ENCODE measurements at regions of chr2 and their contacts with region 1.

Region 1: GRCh38 chr2:189115126-189115525 is 64.4 kb downstream of the COL5A2 start:
- DNase-seq: no peak
- H3K4me3 ChIP-seq: no peak overlapping the region
- H3K27ac ChIP-seq: no peak overlapping the region
- H3K27me3 ChIP-seq: no peaks in the 10 kb centered on the region
- CTCF ChIP-seq: peak in 43 of 56 donors; percentile 7 to 59 (median 29)

Region 2: DNA sequence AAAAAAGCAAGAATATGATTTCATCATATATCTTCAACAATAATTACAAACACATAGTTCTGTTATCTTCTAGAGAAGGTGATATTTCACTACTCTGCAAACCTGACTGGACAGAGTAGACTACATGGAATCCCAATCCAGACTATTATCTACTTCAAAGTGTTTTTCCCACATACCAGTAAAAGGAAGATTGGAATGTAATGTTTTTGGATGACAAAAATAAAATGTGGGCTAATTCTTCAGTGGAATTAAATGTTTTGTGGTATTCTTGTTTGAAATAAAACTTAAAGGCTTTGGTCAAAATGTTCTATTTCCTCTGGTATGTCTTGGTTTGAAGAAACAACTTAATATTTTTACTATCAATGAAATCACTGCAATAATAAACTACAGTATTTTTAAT is 42.3 kb after region 1 on chr2:
- intact Hi-C with region 1: no loop called
- DNase-seq: no peak
- H3K4me3 ChIP-seq: no peak overlapping the region
- H3K27ac ChIP-seq: no peak overlapping the region
- H3K27me3 ChIP-seq: no peaks in the 10 kb centered on the region
- CTCF ChIP-seq: no peak

Region 3: GRCh38 chr2:189287982-189288521 is 172.9 kb after region 1 on chr2:
- intact Hi-C with region 1: loop called in 1 of 2 experiments (anchors 10 kb)
- DNase-seq: no peak
- H3K4me3 ChIP-seq: no peak overlapping the region
- H3K27ac ChIP-seq: no peak overlapping the region
- H3K27me3 ChIP-seq: no peaks in the 10 kb centered on the region
- CTCF ChIP-seq: peak in 54 of 56 donors; percentile 24 to 72 (median 48)

Region 4: DNA sequence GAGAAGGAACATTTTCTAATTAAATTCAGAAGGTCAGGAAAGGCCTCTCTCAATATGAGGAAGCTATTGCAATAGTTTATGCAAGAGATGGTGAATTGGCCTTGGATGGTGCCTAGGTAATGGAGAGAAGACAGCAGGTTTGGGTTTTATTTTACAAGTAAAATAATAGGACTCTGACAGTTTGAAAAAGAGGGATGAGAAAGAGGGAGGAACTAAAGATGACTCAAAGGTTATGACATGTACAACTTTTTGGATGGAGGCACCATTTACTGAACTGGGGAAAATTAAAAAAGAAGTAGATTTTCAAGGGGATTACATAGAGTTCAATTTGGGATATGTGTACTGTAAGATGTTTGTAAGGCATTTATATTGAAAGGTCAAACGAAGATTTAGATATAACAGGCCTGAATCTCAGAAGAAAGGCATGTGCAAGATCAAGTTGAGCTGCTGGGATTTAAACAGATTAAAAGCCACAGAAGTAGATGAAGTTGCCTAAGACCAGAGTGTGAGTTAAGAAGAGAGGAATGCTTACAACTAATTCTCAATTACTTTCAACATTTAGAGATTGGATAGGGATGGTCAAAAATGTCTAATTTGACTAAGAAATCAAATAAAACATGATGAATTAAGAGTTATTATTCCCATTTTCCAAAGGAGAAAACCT is 533.9 kb after region 1 on chr2:
- intact Hi-C with region 1: no loop called
- DNase-seq: no peak
- H3K4me3 ChIP-seq: no peak overlapping the region
- H3K27ac ChIP-seq: no peak overlapping the region
- H3K27me3 ChIP-seq: no peaks in the 10 kb centered on the region
- CTCF ChIP-seq: no peak